Heart right ventricle (tissue), 16 donors: ENCODE measurements at regions of chr3 and their contacts with region 1.

Region 1: GRCh38 chr3:36332139-36332538 is 48.2 kb upstream of the STAC start:
- DNase-seq: no peak
- ATAC-seq: no peak
- H3K4me3 ChIP-seq: no peak overlapping the region
- H3K27ac ChIP-seq: no peak overlapping the region
- H3K4me1 ChIP-seq: no peaks in the 10 kb centered on the region
- H3K27me3 ChIP-seq: no peaks in the 10 kb centered on the region
- CTCF ChIP-seq: no peak

Region 2: DNA sequence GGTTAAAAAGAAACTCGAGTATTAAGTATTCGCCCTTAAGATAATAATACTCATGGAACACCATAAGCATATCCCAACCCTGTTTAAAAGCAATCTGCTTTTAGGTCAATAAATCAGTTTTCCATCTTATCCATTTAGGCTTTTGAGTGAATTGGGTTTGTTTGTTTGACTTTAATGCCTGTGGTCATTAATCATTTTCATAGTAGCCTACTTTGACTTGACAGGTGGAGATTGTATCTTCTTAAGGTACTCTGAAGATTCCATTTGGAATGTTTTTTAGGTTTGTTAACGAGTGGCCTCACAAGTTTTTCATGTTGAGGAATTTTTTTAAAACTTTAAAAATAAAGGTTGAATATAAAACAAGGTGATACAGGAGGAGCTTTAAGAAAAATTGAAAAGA is 38.4 kb before region 1 on chr3:
- intact Hi-C with region 1: loop called in 1 of 10 experiments (anchors 2 kb)
- DNase-seq: no peak
- ATAC-seq: no peak
- H3K4me3 ChIP-seq: no peak overlapping the region
- H3K27ac ChIP-seq: no peak overlapping the region
- H3K4me1 ChIP-seq: peaks cover 0 to 23% (median 0%) of the 10 kb centered on the region in 9 donors
- H3K27me3 ChIP-seq: no peaks in the 10 kb centered on the region
- CTCF ChIP-seq: no peak